ENCODE measurements at regions of chr5 and their contacts with region 1.

Region 1: DNA sequence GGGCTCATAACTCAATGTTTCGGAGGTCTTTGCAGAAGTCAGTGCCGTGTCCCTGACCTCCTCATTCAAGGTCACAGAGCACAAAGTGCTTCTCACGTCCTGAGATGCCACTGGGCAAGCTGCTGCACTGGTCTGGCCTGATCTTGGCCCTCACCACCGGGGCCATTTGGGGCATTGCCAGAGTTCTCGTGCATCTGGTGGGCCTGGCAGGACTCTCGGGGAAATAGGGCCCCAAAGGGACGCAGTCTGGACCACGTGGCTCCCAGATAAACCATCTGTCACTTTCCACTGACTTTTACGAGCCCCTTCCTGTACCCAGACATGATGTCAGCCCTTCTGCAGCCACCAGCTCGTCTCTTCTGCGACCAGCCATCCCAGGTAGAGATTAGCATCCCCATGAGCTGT is 54.8 kb downstream of the HRH2 start:
- DNase-seq: no peak
- H3K4me3 ChIP-seq: no peak overlapping the region
- H3K27ac ChIP-seq: no peak overlapping the region
- H3K4me1 ChIP-seq: no peaks in the 10 kb centered on the region
- H3K27me3 ChIP-seq: no peaks in the 10 kb centered on the region
- CTCF ChIP-seq: no peak
- POLR2A ChIP-seq: no peak

Region 2: DNA sequence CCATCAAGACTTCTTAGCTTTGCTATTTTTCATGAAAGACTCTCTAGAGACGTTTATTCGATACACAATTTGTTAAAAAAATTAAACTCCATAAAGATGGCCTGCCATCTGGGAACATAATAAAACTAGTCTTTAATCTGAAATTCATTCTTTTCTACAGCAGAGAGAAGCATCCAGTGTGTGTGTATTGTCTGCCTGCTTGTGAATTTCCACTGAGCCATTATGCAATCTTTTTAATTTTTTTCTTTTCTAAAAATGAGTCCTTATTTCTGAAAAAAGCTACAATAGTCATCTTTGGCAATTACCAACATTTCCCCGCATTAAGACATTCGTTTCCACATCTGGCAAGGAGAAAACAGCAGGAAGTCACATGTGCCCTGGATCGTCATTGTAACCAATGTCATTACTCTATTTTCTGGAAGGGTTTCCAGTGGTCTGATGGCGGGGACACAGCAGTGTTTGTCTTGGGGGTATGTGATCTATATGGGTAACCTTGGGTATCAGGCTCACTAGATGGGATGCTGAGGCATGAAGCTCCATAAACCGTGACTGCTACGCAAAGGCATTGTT is 725.2 kb before region 1 on chr5:
- intact Hi-C with region 1: no loop called
- DNase-seq: no peak
- H3K4me3 ChIP-seq: no peak overlapping the region
- H3K27ac ChIP-seq: no peak overlapping the region
- H3K4me1 ChIP-seq: no peaks in the 10 kb centered on the region
- H3K27me3 ChIP-seq: no peaks in the 10 kb centered on the region
- CTCF ChIP-seq: no peak
- POLR2A ChIP-seq: no peak

Region 3: GRCh38 chr5:175534070-175534932 is 178.4 kb before region 1 on chr5:
- intact Hi-C with region 1: loop called (anchors 5 kb)
- DNase-seq: no peak
- H3K4me3 ChIP-seq: no peak overlapping the region
- H3K27ac ChIP-seq: no peak overlapping the region
- H3K4me1 ChIP-seq: peaks cover 10% of the 10 kb centered on the region
- H3K27me3 ChIP-seq: no peaks in the 10 kb centered on the region
- CTCF ChIP-seq: peak; percentile 74 to 93 (median 86)
- POLR2A ChIP-seq: no peak